Mammary epithelial cell (primary cell): ENCODE measurements at regions of chr2 and their contacts with region 1.

Region 1: DNA sequence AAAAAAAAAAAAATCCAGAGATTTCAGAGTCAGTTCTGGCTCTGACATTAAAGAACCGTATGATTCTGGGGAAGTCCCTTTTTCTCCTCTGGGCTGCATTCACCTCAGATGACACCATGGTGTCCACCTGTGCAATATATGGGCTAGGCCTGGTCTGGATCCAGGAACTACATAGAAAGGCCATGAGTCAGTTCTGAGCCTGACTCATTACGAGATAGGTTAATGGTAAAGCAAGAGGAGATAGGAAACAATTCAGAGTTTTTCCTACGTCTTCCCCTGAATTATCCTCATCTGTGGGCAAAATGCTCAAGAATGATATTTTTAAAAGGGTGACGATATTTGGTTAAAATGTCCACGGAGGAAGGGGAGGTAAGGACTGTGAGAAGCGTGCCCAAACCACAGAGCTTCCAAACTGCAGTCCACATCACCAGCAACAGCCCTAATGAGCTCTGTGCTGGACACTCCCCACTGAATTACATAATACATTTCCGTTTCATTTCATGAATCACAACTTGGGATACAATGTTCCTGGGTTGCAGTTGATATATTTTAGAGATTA is 180.1 kb upstream of the OSR1 start:
- DNase-seq: peak; percentile 99
- H3K4me3 ChIP-seq: peak overlapping the region in 2 of 3 experiments; percentile 19 to 38
- H3K27ac ChIP-seq: peak overlapping the region; percentile 97
- H3K4me1 ChIP-seq: peaks cover 64% of the 10 kb centered on the region
- H3K27me3 ChIP-seq: no peaks in the 10 kb centered on the region
- CTCF ChIP-seq: no peak

Region 2: DNA sequence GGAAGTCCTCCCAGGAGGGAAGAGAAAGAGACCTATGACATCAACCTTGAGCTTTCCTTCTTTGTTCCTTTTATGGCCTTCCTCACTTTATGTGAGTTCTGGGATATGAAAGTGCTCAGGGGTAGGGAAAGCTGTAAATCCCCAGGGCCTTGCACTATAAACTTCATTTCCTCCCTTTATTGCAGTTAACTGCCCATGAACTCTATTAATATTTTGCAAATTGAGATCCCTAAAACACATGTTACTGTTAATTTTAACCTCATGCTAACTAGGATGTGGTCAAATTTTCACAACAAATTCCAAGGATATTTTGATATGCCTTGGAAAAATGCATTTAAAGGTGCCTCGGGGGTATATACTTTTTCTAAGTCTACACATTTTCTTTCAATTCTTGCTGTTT is 540.0 kb before region 1 on chr2:
- CTCF ChIA-PET with region 1: no interaction called
- dilution Hi-C with region 1: no loop called
- in situ Hi-C with region 1: no loop called
- intact Hi-C with region 1: no loop called
- DNase-seq: no peak
- H3K4me3 ChIP-seq: no peak overlapping the region
- H3K27ac ChIP-seq: no peak overlapping the region
- H3K4me1 ChIP-seq: peaks cover 5% of the 10 kb centered on the region
- H3K27me3 ChIP-seq: no peaks in the 10 kb centered on the region
- CTCF ChIP-seq: no peak

Region 3: DNA sequence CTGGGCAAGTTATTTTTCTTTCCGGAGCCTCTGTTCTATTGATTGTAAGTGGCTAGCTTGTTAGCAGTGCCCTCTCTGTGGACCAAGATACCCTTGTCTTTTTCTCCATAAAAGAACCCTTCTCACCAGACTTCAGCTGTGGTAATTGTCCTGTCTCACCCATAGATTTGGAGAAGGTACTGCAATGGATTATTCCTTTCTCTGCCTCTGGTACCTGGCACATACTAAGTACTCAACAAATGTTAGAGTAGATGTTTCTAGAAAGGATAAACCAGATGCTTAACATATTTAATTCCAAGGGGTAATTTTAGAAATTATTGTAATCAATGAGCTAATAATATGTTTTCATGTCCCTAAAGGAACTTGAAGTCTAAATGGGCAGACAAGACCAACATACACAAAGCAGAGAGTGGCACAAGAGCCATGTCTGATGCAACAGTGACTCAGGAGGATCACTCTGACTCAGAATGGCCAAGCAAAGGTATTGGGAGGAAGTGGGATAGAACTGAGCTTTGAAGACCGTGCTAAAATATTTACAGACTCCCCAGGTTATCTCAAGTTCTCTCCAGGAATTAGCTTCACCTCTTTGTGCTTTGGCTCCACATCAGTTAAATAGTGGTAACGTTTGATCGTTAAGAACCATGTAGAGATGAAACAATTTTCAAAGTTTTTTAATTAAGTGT is 50.3 kb before region 1 on chr2:
- CTCF ChIA-PET with region 1: no interaction called
- dilution Hi-C with region 1: no loop called
- in situ Hi-C with region 1: no loop called
- intact Hi-C with region 1: loop called (anchors 1 kb)
- DNase-seq: peak; percentile 95
- H3K4me3 ChIP-seq: no peak overlapping the region
- H3K27ac ChIP-seq: peak overlapping the region; percentile 81
- H3K4me1 ChIP-seq: peaks cover 13% of the 10 kb centered on the region
- H3K27me3 ChIP-seq: no peaks in the 10 kb centered on the region
- CTCF ChIP-seq: no peak

Region 4: GRCh38 chr2:19611491-19612332 is 73.2 kb after region 1 on chr2:
- CTCF ChIA-PET with region 1: no interaction called
- dilution Hi-C with region 1: no loop called
- in situ Hi-C with region 1: no loop called
- intact Hi-C with region 1: loop called (anchors 1 kb)
- DNase-seq: peak; percentile 97
- H3K4me3 ChIP-seq: no peak overlapping the region
- H3K27ac ChIP-seq: peak overlapping the region; percentile 91
- H3K4me1 ChIP-seq: peaks cover 30% of the 10 kb centered on the region
- H3K27me3 ChIP-seq: no peaks in the 10 kb centered on the region
- CTCF ChIP-seq: no peak

Region 5: DNA sequence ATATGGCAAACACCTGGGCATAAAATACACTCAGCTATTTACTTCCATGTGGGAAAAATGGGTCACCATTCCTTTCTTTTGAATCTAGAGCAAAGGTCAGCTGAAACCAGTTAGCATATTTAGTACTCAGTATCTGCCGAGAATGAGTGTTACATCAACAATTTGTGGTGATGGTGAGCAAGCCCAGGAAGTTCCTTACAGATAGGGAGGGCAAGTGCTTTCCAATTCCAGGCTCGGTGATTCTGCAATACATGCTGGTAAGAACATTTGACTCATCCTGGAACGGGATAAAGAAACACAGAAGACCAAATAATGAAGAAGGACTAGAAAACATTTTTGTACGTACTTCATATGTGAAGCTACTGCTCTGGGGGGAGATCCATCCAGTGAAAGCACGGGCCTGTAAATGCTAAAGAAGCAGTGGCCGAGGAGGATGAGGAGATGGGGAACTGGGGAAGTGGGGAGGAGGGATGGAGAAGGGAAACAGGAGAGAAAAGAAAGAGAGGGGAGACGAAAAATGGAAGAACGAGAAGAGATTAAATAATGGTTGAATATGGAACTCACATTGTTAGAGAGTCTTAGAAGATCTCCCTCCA is 111.4 kb after region 1 on chr2:
- CTCF ChIA-PET with region 1: no interaction called
- dilution Hi-C with region 1: no loop called
- in situ Hi-C with region 1: no loop called
- intact Hi-C with region 1: loop called (anchors 1 kb)
- DNase-seq: peak; percentile 99
- H3K4me3 ChIP-seq: no peak overlapping the region
- H3K27ac ChIP-seq: peak overlapping the region; percentile 85
- H3K4me1 ChIP-seq: peaks cover 50% of the 10 kb centered on the region
- H3K27me3 ChIP-seq: no peaks in the 10 kb centered on the region
- CTCF ChIP-seq: no peak